ENCODE measurements at regions of chr12 and their contacts with region 1.

Region 1: DNA sequence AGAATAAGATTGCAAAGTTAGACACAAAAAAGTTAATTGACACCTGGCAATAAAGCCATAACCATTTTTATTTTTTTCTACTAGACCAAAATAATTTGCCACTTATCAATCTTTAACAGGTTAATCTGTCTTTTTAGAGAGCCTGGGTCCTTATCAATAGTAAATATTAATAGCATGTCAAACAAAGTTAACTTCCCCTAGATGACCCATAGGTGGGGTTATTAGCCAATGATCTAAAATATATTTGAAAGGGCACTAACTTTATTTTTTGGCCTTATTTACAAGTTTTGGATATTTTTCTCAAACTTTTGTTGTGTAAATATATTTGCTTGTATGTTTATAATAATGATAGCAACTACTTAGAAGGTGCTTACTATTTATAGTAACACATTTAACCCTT is 3.9 kb downstream of the ANKRD33 start:
- DNase-seq: no peak
- H3K4me3 ChIP-seq: no peak overlapping the region
- CTCF ChIP-seq: peak; percentile 16

Region 2: GRCh38 chr12:51879102-51879501 is 12.7 kb before region 1 on chr12:
- CTCF ChIA-PET with region 1: interaction called, 54 read pairs
- POLR2A ChIA-PET with region 1: no interaction called
- DNase-seq: no peak
- H3K4me3 ChIP-seq: no peak overlapping the region
- CTCF ChIP-seq: no peak

Region 3: DNA sequence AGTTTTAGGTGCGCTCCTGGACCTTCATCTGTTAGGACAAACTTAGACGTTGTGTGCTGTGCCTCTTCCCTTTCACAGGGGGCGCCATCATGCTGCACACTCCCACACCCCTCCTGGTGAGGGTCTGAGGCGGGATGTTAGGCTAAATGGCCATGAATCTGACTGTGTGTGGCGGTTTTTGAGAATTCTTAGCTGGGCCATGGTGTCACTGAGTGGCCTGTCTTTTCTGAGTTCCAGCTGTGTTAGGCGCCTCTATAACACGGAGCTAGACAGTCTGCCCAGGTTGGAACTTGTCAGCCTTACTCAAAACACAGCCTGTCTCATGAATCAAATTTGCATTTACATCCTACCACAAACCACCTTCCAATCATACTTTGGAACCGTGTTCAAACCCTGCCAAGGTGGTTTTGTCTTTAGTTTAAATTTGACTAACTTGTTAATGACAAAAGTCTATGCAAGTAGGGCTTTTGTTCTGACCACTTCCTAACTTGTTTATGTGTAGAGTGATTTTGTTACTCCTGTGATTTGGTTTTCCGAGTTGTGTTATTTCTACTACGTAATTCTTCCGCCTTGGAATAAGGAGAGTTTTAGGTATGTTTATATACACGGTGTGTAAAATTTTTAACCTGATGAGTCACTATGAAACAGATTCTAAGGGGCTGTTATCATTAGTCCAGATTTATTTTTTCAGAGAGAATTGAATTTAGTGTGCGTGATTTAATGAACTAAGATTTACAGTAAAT is 79.2 kb after region 1 on chr12:
- CTCF ChIA-PET with region 1: interaction called, 77 read pairs
- POLR2A ChIA-PET with region 1: no interaction called
- DNase-seq: no peak
- H3K4me3 ChIP-seq: no peak overlapping the region
- CTCF ChIP-seq: peak; percentile 61

Region 4: DNA sequence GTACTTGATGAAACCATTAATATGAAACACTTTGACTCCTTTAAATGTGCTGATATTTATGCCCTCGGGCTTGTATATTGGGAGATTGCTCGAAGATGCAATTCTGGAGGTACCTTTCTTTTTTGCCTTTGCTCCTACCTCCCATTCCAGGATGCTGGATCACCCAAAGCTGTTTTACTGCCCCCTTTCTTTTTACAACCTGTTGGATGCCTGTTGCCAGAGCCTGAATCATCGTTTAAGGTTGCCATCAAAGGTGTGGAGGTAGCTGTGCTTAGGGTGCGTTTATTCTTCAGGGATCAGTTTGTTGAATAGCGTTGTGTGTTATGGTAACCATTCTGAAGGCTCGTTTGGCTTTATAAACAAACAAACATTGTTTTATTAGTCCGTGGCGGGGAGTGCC is 95.0 kb after region 1 on chr12:
- CTCF ChIA-PET with region 1: interaction called, 146 read pairs
- POLR2A ChIA-PET with region 1: no interaction called
- DNase-seq: no peak
- H3K4me3 ChIP-seq: no peak overlapping the region
- CTCF ChIP-seq: no peak

Measured in AG04449 (cell line).